ENCODE measurements at regions of chr7 and their contacts with region 1.

Region 1: GRCh38 chr7:66758950-66759628 is 18.6 kb downstream of the RABGEF1 start:
- DNase-seq: no peak
- H3K4me3 Mint-ChIP-seq: no peak overlapping the region
- H3K27ac Mint-ChIP-seq: no peak overlapping the region
- H3K4me1 Mint-ChIP-seq: no peaks in the 10 kb centered on the region
- H3K27me3 Mint-ChIP-seq: no peaks in the 10 kb centered on the region
- CTCF ChIP-seq: no peak

Region 2: DNA sequence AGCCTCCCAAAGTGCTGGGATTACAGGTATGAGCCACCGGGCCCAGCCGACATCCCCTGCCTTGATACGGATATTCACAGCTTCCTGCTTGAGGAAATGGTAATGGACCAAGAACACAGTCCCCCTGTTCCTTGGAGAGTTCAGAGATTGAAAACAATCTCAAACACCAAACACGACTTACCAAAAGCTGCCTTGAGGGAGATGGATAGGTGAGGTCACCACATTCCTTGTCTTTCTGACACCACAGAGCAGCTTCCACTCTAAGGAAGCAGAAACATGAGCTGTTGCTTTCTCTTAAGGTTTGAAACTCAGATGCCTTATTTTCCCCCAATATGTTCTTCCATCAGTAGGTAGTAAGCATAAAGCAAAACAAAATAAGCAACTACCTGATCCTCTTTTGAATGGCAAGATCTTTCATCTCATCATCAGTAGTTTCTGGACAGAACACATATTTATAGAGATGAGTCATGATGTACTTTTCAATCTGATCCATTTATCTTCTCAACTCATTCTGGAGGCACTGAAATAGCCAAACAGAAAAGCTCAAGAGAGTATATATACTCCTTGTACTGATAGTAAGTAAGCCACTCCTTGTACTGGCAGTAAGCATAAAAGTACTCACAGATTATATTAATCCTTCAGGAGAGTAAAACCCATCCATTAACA is 329.5 kb before region 1 on chr7:
- CTCF ChIA-PET with region 1: no interaction called
- intact Hi-C with region 1: loop called (anchors 10 kb)
- DNase-seq: no peak
- H3K4me3 Mint-ChIP-seq: no peak overlapping the region
- H3K27ac Mint-ChIP-seq: no peak overlapping the region
- H3K4me1 Mint-ChIP-seq: no peaks in the 10 kb centered on the region
- H3K27me3 Mint-ChIP-seq: no peaks in the 10 kb centered on the region
- CTCF ChIP-seq: no peak

Region 3: GRCh38 chr7:66628361-66629140 is 130.5 kb before region 1 on chr7 and contains the start of gene KCTD7:
- CTCF ChIA-PET with region 1: no interaction called
- intact Hi-C with region 1: no loop called
- DNase-seq: peak; percentile 94
- H3K4me3 Mint-ChIP-seq: peak within 1 kb of the TSS; percentile 73
- H3K27ac Mint-ChIP-seq: peak within 1 kb of the TSS; percentile 39
- H3K4me1 Mint-ChIP-seq: peaks cover 10% of the 10 kb centered on the region
- H3K27me3 Mint-ChIP-seq: no peaks in the 10 kb centered on the region
- CTCF ChIP-seq: no peak
- total RNA-seq, gene KCTD7: 4.3 and 5.5 TPM in 2 replicates

Measured in Calu3 (cell line).